Activated T-helper 1 cell treated with anti-CD3 and anti-CD28 coated beads, Interleukin-12 subunit alpha, Interleukin-12 subunit beta, Interleukin-2, Interleukin-4 antibody, amounts not matched to agents 30 ng/mL and 10 ng/mL and 1 ng/mL, durations not matched to agents 14 hours and 24 hours and 36 hours (primary cell): ENCODE measurements at regions of chr15 and their contacts with region 1.

Region 1: DNA sequence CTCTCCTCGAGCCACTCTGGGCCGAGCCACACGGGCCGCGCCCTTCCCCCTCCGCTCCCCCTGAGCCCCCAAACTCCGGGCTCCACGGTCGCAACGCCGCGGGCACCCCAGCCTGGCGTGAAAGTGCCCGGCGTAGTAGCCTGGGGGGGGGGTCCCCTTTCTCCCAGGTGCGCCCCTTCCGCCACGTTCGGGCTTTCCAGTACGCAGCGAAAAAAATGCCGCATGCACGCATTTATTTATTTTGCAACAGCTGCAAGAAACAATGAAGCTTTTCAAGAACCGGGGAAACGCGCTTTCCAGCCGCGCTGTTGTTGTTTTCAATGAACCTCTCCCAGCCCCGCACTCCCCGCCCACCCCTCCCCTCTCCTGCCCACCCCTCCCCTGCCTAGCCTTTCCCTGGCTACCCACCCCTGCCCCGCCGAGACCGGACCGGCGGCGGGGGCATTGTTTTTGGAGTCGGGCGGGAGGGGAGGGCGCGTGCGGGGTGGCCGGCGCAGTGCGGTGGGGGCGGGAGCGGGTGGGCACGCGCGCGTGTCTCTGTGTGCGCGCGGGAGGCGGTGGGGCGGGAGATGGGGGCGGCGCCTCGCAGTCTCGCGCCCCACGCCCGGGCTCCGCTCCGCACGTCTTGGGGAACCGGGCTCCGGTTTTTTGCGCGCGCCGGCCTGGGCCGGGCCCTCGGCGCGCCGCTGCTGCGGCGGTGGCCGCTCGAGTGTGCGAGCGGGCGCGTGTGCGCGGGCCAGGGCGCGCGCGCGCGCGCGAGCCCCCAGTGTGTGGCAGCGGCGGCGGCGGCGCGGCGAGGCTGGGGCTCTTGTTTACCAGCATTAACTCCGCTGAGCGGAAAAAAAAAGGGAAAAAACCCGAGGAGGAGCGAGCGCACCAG is at the start of gene IGF1R:
- DNase-seq: peak; percentile 87
- H3K4me3 Mint-ChIP-seq: peak within 1 kb of the TSS; percentile 85
- H3K27ac Mint-ChIP-seq: peak within 1 kb of the TSS; percentile 93
- H3K4me1 Mint-ChIP-seq: peaks cover 34% of the 10 kb centered on the region
- H3K27me3 Mint-ChIP-seq: peaks cover 56% of the 10 kb centered on the region
- total RNA-seq, gene IGF1R: 38.7 and 39.8 TPM in 2 replicates

Region 2: GRCh38 chr15:97960364-97961066 is 687.5 kb before region 1 on chr15 and contains the start of gene ARRDC4:
- intact Hi-C with region 1: loop called (anchors 5 kb)
- DNase-seq: peak; percentile 97
- H3K4me3 Mint-ChIP-seq: peak within 1 kb of the TSS; percentile 82
- H3K27ac Mint-ChIP-seq: peak within 1 kb of the TSS; percentile 75
- H3K4me1 Mint-ChIP-seq: peaks cover 35% of the 10 kb centered on the region
- H3K27me3 Mint-ChIP-seq: peaks cover 16% of the 10 kb centered on the region
- total RNA-seq, gene ARRDC4: 1.3 and 1.5 TPM in 2 replicates

Region 3: GRCh38 chr15:98548154-98548971 is 99.7 kb before region 1 on chr15:
- intact Hi-C with region 1: loop called (anchors 2 kb)
- DNase-seq: peak; percentile 1
- H3K4me3 Mint-ChIP-seq: peak overlapping the region; percentile 81
- H3K27ac Mint-ChIP-seq: peak overlapping the region; percentile 38
- H3K4me1 Mint-ChIP-seq: peaks cover 18% of the 10 kb centered on the region
- H3K27me3 Mint-ChIP-seq: peaks cover 40% of the 10 kb centered on the region

Region 4: GRCh38 chr15:98700519-98700918 is 52.5 kb after region 1 on chr15:
- intact Hi-C with region 1: loop called (anchors 5 kb)
- DNase-seq: no peak
- H3K4me3 Mint-ChIP-seq: no peak overlapping the region
- H3K27ac Mint-ChIP-seq: peak overlapping the region; percentile 76
- H3K4me1 Mint-ChIP-seq: peaks cover 37% of the 10 kb centered on the region
- H3K27me3 Mint-ChIP-seq: no peaks in the 10 kb centered on the region

Region 5: DNA sequence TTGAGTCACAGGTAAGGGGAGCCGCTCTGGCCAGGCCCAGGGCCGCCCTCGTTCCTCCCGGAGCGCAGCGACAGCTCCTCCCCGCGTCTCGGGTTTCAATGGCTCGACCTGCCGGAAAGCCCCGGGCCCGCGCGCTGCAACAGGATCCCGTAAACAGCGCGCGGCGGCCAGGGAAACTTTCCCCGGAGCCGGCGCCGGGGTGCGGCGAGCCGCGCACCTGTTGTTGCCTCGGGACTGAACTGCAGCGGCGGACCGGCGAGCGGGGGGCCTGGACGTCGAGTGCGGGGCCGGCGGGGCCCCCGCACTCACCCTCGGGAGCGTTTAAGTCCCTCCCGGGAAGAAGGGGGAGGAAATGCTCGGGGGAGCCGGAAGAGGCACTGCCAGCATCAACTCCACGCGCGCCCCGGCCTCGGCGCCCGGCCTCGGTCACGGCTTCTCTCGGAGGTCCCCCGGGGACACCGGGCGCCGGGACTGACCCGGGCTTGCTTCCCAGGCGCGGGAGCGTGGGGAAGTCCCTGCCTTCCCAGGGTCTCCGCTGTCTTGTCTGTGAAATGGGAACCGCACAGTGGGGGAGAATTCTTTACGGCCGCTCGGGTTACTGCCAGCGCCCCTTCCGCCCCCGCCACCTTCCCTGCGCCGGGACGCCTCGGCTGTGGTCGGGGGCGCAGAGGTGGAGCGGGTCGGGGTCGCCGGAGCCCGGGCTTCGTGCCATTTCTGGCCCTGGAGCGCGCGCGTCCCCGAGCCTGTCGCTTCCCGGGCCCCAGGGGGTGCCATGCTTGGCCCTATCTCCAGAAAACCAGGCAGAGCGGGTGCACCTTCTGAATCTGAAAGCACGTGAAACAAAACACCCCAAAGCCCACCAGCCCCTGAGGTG is 367.0 kb after region 1 on chr15:
- intact Hi-C with region 1: loop called (anchors 2 kb)
- DNase-seq: peak; percentile 60
- H3K4me3 Mint-ChIP-seq: peak overlapping the region; percentile 74
- H3K27ac Mint-ChIP-seq: peak overlapping the region; percentile 78
- H3K4me1 Mint-ChIP-seq: no peaks in the 10 kb centered on the region
- H3K27me3 Mint-ChIP-seq: peaks cover 38% of the 10 kb centered on the region

Region 6: GRCh38 chr15:99250494-99251435 is 602.8 kb after region 1 on chr15:
- intact Hi-C with region 1: loop called (anchors 5 kb)
- DNase-seq: peak; percentile 96
- H3K4me3 Mint-ChIP-seq: peak overlapping the region; percentile 89
- H3K27ac Mint-ChIP-seq: peak overlapping the region; percentile 82
- H3K4me1 Mint-ChIP-seq: peaks cover 31% of the 10 kb centered on the region
- H3K27me3 Mint-ChIP-seq: no peaks in the 10 kb centered on the region

Region 7: DNA sequence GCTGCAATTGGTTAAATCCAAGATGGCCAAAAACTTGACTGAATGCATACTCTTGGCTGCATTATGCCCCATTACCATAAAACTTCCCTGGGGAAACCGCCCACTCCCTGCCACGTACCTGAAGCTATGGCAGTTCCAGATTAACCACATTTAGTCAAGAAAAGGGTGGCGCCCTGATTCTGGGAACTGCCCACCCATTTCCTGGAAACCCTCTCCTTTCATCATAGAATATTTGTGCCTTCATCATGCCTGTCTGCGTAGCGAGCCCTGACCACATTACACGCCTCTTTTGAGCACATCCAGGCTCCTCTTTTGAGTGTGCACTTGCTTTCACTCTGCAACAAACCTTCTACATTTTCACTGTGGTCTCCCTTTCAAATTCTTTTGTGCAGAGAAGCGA is 1948.8 kb after region 1 on chr15:
- intact Hi-C with region 1: loop called (anchors 5 kb)
- DNase-seq: peak; percentile 92
- H3K4me3 Mint-ChIP-seq: peak overlapping the region; percentile 86
- H3K27ac Mint-ChIP-seq: peak overlapping the region; percentile 97
- H3K4me1 Mint-ChIP-seq: peaks cover 69% of the 10 kb centered on the region
- H3K27me3 Mint-ChIP-seq: peaks cover 3% of the 10 kb centered on the region